Left ventricle myocardium superior (tissue), 1 donor: ENCODE measurements at regions of chr4 and their contacts with region 1.

Region 1: DNA sequence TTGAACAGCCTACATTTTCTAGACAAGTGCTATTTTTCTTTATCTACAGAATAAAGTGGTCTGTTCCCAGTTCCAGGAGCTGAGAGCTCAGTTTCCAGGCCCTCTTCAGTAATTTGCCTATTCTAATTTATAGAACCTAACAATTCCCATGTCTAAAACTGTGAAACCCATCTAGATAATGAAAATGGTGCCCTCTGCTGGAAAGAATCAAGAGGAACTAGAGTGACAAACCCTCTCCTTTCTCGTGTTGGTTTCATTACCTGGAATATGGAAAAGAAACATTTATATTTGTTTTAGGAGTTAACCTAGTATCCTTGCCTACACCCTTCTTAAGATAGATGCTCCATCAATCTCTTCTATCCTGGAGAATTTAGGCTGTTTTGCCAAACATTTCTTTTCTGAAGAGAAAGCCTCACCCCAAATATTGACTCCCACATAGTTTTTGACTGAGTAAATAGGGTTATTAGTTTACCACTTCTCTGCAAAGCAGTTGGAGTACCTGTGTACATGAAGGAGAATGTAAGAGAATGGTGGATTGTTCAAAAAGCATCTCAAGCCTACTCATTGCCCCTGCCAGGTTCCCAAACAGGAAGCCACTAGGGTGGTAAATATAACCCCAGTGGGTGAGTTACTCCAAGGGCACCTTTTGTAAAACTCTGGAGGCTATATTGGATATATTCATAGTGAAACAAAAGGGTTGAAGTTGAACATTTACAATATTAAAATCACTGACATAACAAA is 121.6 kb downstream of the RASL11B start:
- DNase-seq: no peak
- ATAC-seq: peak; percentile 78

Region 2: DNA sequence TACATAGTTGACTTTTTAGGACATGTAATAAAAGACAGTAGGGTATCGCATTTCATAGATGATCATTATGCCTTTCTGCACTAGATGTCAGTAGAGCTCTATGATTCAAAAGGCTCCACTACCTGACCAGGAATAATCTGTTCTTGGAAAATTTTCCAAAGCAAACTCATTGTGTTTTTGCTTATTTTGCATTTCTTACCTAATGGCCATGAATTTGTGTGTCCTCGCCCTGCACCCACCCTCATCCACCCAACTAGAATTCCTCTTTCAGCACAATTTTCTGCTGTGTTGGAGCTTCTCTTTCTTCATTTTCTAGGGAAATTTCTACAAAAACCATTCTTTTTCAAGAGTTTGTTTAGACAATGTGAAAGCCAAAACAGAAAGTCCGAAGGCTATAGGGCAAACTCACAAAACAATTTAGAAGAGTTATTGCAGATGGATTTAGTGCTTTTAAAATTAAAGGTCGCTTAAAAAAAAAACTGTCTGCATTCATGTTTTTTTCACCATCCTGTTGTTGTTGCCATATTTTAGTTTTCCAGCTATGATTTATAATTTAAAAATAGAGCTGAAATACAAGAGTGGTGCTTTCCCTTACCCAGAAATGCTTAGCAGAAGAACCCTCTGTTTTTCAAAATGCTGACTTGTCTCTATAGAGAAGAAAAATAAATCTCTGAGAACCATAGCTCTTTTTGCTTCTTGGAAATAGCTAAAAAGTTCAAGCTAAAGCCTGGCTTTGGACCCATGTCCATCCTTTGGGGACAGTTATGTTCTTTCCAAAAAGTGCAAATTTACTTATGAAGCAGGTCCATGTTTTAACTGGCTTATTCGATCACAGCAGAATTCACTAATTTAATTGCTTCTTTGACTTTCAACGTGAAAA is 748.9 kb before region 1 on chr4:
- intact Hi-C with region 1: loop called (anchors 5 kb)
- DNase-seq: no peak
- ATAC-seq: peak; percentile 91

Region 3: GRCh38 chr4:52376132-52376704 is 607.5 kb before region 1 on chr4:
- intact Hi-C with region 1: loop called (anchors 5 kb)
- DNase-seq: no peak
- ATAC-seq: no peak

Region 4: DNA sequence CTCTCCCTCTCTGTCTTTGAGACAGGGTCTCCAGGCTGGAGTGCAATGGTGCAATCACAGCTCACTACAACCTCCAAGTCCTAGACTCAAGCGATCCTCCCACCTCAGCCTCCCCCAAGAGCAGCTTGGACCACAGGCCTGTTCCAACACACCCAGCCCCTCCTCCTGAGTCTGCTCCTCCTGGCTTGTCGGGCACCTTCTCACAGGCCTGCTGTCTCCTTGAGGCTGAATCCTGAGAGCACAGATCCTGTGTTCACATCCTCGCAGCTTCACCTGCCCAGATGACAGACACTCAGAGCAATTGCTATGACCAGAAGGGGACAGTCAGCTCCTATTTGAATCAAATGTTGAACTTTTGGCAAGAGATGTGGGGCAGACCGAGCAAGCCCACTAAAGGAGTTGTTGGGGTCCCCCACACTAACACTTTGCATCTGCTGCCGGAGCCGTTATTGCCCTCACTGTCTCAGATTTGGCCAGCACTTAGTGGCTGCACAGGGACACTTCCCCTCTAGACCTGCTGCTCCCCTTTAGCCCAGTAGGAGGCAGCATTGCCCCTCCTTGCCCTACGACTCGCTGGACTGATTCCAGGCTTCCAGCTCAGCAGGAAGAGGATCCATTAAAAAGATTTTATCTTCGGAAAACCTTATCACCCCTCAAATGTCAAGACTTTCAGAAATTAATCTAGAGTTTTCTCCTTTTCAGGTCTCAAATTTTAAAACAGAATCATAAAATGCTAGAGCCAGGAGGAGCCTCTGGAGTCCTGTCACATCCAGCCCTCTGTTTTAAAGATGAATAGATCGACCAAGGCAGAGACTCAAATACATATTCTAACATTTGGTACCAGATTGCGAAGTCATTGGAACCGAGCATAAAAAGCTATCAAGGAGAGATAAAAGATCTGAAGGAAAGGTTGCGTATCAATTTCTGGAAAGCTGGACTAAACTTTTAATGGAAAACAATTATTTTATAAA is 438.3 kb before region 1 on chr4:
- intact Hi-C with region 1: loop called (anchors 5 kb)
- DNase-seq: peak; percentile 82
- ATAC-seq: peak; percentile 75

Region 5: DNA sequence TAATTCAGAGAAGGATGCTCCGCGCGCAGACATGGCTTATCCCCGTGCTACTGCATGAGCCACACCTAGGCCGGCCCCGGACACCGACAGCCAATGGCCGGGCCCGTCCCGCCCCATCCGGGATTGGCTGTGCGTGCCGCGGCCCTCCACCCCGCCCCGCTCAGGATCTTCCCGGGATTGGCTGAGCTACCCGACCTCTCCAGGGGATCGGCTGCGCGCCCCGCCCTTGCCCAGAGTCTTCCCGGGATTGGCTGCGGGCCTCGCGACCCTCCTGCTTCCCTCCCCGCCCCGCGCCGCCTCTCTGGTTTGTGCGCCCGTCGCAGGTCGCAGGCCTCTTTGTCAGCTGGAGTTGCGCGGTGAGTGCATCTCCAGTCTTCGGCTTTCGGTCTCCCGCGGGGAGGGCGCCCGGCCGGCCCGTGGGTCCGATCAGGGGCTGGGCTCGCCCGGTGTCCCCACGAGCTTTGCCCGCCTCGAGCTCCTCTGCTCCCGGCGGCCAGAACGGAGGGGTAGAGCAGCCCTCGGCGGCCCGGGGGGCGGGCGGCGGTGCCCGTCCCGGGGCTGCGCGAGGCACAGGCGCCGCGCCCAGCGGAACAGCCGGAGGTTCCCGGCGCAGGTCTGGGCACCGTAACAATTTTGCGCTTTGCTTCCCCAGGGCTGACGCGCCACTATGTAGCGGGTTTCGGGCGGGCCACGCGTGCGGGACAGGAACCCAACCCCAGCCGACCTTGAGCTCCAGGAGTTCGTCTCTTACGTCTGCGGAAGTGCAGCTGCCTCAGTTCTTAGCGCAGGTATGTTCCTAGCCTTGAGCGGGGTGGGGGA is 271.4 kb before region 1 on chr4:
- intact Hi-C with region 1: loop called (anchors 10 kb)
- DNase-seq: peak; percentile 99
- ATAC-seq: peak; percentile 98

Region 6: DNA sequence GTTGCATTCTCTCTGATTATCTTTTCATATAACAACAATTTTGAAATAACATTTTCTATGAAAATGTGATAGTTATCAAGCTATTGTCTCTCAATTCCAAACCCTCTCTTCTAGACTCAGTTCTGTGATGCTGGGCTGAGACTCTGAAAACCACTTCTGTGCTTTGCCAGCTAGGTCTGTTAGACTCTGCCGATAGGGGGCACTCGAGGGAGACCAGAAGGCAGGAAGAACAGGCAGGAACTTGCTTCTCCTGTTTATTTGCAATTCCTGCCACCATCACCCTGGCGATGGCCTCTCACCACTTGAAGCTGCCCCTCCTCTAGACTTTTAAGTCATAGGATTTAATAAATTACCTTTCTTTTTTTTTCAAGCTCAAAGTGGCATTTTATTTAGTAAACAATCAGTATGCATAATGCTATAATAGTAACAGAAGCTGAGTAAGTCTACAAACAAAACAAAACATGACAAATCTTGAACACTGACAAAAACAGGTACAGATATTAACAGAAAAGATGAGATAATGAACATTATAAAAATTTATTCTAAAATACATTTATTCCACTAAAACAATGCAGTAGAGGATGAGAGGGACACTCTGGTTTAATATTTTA is 71.9 kb before region 1 on chr4:
- intact Hi-C with region 1: loop called (anchors 10 kb)
- DNase-seq: peak; percentile 72
- ATAC-seq: peak; percentile 53